Dendritic cell treated with granulocyte-macrophage colony-stimulating factor and Interleukin-4, amounts not matched to agents 40 ng/mL and 50 ng/mL, for 4 days (primary cell): ENCODE measurements at regions of chr5 and their contacts with region 1.

Region 1: GRCh38 chr5:147188200-147189108 is 46.4 kb upstream of the STK32A start:
- H3K4me3 Mint-ChIP-seq: no peak overlapping the region
- H3K27ac Mint-ChIP-seq: no peak overlapping the region
- H3K4me1 Mint-ChIP-seq: peaks cover 5% of the 10 kb centered on the region
- H3K27me3 Mint-ChIP-seq: peaks cover 6% of the 10 kb centered on the region

Region 2: GRCh38 chr5:146533260-146533857 is 655.1 kb before region 1 on chr5:
- intact Hi-C with region 1: loop called (anchors 2 kb)
- H3K4me3 Mint-ChIP-seq: no peak overlapping the region
- H3K27ac Mint-ChIP-seq: no peak overlapping the region
- H3K4me1 Mint-ChIP-seq: peaks cover 6% of the 10 kb centered on the region
- H3K27me3 Mint-ChIP-seq: no peaks in the 10 kb centered on the region

Region 3: GRCh38 chr5:147160902-147161700 is 27.4 kb before region 1 on chr5:
- intact Hi-C with region 1: no loop called
- H3K4me3 Mint-ChIP-seq: no peak overlapping the region
- H3K27ac Mint-ChIP-seq: no peak overlapping the region
- H3K4me1 Mint-ChIP-seq: no peaks in the 10 kb centered on the region
- H3K27me3 Mint-ChIP-seq: no peaks in the 10 kb centered on the region